Head of caudate nucleus (tissue), 42 donors: ENCODE measurements at regions of chr2 and their contacts with region 1.

Region 1: DNA sequence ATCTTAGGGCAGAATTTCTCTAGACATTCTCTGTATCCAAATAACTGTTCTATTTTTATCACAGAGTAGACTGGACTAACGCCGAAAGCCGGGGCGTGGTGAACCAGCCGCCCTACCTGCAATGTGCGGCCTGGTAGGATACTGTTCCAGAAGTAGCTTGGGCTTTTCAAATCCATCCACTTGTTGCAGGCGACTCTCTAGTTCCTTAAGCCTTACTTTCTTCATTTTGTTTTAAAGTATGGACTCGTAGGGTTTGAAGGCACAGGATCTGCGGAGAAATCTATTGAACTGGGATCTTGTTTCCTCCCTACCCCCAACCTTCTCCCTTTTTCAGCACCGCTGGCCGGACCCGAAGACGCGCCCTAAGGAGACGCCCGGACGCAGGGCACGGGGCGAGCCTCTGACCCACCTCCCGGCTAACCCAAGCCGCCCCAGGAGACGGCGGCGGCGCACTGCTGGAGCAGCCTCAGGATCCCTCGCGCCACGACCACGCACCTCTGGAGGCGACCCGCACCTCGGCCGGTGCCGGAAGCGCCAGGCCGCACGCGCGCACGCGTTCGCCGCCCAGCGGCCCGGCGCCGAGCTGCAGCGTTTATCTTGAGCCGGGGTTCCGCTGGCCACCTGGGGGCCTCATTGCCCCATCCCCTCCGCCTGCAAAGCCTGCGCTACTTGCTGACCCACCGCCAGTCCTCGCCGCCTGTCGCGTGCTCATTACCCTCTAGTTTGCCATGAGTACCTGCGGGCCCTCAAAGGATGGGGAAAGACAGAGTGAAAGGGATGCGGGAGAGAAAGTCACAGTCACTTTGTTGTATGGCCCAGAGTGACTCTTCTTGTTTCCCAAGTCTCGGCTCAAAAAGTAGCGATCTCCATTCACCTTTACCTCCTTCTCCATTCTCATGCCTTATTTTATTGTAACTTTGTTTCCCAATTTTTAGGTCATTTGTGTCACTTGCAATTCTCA is at the start of gene METTL5:
- DNase-seq: peak; percentile 53 to 94 (median 86)

Region 2: GRCh38 chr2:169755083-169755870 is 69.4 kb before region 1 on chr2:
- intact Hi-C with region 1: no loop called
- DNase-seq: no peak

Region 3: GRCh38 chr2:169928463-169928864 is 103.8 kb after region 1 on chr2:
- intact Hi-C with region 1: loop called (anchors 5 kb)
- DNase-seq: peak in 1 of 42 donors; percentile 8

Region 4: DNA sequence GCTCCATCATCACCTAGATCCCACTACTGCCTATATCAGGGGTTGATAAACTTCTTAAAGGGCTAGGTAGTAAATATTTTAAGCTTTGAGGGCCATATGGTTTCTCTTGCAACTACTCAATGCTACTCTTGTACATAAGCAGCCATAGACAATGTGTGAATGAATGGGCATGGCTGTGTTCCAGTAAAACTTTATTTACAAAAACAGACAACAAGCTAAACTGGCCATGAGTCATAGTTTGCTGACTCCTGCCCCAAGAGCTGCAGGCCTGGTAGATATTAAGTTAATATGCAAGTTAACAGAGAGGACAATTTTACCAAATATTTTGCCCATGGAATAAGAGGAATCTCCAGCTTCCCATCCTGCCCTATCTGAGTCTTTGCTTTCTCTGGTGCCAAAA is 323.5 kb after region 1 on chr2:
- intact Hi-C with region 1: no loop called
- DNase-seq: no peak